Breast epithelium (tissue), 4 donors: ENCODE measurements at regions of chr1 and their contacts with region 1.

Region 1: GRCh38 chr1:229619614-229620013 is 6.3 kb downstream of the TAF5L start:
- DNase-seq: no peak
- H3K4me3 ChIP-seq: no peak overlapping the region
- H3K27ac ChIP-seq: no peak overlapping the region
- H3K4me1 ChIP-seq: peaks cover 0 to 8% of the 10 kb centered on the region in 2 donors
- H3K27me3 ChIP-seq: no peaks in the 10 kb centered on the region
- CTCF ChIP-seq: no peak
- POLR2A ChIP-seq: no peak

Region 2: DNA sequence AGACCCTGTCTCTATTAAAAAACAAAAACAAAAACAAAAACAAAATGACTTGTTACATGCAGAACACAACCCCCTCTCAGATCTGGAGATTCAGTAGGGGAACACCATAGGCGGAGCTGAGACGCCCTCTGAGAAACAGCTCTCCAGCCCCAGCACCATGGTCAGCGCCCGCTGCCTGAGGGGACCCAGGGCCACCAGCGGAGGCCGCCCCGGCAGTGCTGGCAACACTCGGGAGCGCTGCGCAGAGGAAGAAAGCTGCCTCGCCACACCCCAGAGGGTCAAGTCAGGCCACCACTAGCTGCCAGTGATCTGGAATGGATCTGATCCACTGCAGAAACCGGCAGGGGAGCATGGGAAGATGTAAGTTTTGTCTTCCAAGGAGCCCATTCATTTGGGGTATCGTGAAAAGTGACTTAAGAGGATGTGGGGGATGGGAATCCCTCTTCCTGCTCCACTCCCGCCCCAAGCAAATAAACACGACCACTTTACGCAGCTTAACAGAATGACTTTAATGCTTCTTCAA is 188.8 kb before region 1 on chr1:
- intact Hi-C with region 1: no loop called
- DNase-seq: no peak
- H3K4me3 ChIP-seq: peak overlapping the region in 1 of 3 donors; percentile 64
- H3K27ac ChIP-seq: no peak overlapping the region
- H3K4me1 ChIP-seq: peaks cover 6 to 16% of the 10 kb centered on the region in 2 donors
- H3K27me3 ChIP-seq: peaks cover 4 to 76% of the 10 kb centered on the region in 2 donors
- CTCF ChIP-seq: no peak
- POLR2A ChIP-seq: no peak

Region 3: DNA sequence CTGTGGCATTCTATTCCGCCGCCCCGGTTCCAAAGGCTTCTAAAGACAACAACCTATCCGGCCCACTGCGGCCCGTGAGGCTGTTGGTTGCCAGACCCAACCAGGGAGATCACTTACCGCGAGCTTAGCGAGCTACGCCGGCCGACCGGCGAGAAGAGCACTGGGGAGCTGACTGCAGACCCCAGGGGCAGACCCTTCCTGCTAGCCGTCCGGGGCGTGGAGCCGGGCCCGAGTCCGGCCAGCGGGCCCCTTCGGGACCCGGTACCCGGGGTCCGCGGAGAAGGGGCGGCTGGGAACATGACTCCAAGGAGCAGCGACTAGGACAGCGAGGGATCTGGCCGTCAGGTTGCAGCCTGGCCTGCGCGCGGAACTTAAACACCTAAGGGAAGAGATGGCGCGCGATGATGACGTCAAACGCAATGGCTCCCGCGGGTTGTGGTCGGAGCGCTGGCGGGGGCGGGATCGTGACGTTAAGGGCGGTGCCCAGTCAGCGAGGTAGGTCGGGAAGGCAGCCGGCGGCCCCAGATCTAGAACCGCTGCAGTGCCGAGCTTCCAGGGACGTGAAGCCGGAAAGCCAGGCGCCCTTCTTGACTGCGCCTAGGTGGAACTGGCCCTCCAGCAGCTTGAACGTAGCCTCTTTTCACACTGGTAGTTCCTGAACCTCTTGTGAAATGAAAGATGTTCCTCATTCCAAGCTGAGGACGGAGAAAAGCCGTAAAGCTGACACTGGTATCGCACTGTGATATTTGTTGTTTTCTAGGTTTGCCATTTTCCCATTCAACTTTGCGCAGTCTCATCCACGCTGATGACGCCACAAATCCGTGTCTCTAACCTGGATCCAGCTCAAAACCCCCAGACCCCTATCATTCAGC is 111.4 kb before region 1 on chr1 and contains the start of gene NUP133:
- intact Hi-C with region 1: no loop called
- DNase-seq: peak; percentile 99 to 100
- H3K4me3 ChIP-seq: peak within 1 kb of the TSS; percentile 80 to 99 (median 99)
- H3K27ac ChIP-seq: peak within 1 kb of the TSS; percentile 98 to 99
- H3K4me1 ChIP-seq: no peaks in the 10 kb centered on the region
- H3K27me3 ChIP-seq: no peaks in the 10 kb centered on the region
- CTCF ChIP-seq: no peak
- POLR2A ChIP-seq: peak; percentile 73
- total RNA-seq, gene NUP133: 29.4 to 48.4 (median 31.8) TPM

Region 4: DNA sequence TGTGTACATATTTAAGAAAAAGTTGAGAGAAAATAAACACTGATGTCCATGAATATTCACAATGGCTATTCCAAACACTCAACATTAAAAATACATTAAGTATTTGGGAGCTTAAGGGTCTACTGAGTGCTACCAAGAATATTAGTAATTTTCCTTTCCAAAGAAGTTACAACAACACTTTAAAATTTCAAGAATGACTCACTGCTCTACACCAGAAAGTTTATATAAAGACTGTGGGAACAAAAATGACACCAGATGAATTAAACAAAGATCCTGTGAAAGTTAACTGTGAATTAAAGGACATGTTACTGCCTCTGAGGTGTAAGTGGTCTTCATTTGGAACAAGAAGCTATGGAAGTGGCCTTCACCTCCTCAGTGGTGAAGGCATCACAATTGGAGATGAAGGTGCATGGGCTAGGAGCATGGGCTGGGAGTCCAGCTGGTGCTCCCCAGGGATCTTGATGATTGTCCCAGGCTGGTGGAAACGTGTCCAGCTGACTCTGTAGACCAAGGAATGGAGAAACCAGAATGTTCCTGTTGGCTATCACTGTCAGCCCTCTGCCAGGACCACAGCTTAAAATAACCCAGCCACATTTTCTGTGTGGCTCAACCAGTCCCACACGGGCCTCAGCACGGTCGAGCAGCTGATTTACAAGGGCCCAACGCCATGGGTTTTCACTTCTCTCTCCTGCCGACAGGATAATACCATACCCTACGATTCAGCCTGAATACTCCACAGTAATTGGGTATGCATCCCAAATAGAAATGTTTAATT is 22.5 kb before region 1 on chr1:
- intact Hi-C with region 1: loop called (anchors 1 kb)
- DNase-seq: no peak
- H3K4me3 ChIP-seq: no peak overlapping the region
- H3K27ac ChIP-seq: peak overlapping the region in 1 of 2 donors; percentile 74
- H3K4me1 ChIP-seq: no peaks in the 10 kb centered on the region
- H3K27me3 ChIP-seq: no peaks in the 10 kb centered on the region
- CTCF ChIP-seq: no peak
- POLR2A ChIP-seq: no peak

Region 5: DNA sequence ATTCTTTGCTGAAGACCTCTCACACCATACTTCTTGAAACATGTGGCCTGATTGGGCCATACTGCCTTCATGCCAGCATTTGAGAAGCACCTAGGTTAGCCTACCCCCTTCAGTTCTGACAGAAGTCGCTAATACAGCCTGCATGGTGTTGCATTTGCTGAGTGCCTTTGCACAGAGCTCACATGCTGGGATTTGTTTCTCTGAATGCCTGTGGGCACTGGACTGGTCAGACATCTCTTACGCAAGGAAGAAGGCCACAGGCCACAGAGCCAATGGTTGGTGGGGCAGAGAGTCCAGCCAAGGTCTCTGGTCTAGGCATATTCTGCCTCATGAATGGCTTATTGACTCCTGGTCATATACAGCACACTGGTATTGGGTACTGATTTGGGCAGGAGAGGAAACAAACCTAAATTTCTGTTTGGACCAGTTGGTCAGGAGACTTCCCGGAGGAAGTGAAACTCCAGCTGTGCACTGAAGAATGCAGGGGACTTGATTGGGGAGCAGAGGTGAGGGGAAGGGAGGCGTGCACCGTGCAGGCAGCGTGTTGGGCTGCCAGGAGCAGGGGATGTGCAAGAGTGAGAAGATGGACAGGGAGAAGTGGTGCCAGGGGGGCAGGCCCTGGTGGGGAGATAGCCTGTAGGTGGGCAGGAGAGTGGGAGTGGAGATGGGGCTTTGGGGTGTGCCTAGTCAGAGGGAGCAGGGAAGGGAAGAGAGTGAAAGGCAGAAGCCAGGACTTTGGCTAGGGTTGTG is 24.6 kb after region 1 on chr1:
- intact Hi-C with region 1: no loop called
- DNase-seq: no peak
- H3K4me3 ChIP-seq: no peak overlapping the region
- H3K27ac ChIP-seq: no peak overlapping the region
- H3K4me1 ChIP-seq: no peaks in the 10 kb centered on the region
- H3K27me3 ChIP-seq: no peaks in the 10 kb centered on the region
- CTCF ChIP-seq: no peak
- POLR2A ChIP-seq: no peak